A673 (cell line): ENCODE measurements at regions of chr1 and their contacts with region 1.

Region 1: GRCh38 chr1:31663622-31664452 is 19.2 kb upstream of the PEF1 start:
- DNase-seq: peak; percentile 54
- H3K4me3 ChIP-seq: no peak overlapping the region
- H3K27ac ChIP-seq: no peak overlapping the region
- H3K4me1 ChIP-seq: peaks cover 7% of the 10 kb centered on the region
- H3K27me3 ChIP-seq: no peaks in the 10 kb centered on the region
- CTCF ChIP-seq: peak; percentile 87

Region 2: DNA sequence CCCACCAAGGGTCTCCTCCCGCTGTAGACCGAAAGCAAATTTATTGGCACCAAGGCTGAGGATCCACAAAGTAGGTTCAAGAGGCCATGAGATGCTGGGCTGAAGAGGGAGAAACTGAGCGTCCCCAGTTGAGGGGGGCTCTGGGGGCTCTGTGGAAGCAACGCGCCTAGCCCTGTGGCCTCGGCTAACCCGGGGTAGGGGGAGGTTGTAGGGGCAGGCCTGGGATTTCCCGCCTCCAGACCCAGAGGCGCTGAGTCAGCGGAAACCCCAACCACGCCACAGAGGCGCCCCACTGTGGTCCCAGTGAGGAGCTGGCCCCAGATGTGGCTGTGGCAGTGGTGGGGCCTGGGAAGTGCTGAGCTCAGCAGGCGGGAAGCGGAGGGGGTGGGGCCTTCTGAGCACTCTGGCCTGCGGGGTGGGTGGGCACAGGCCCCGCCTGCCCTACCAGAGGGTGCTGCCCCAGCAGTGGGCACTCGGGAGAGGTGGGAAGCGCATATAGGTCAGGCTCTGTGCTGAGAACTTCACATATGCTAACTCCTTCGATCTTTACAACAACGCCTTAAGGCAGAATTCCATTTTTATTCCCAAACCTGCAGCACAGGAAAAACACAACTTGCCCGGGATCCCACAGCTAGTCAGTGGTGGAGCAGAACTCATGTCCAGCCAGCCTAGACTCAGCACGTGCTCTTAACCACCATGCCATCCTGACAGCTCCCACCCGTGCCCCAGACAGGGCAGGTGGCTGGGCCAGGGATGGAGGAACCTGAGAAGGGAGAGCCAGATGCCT is 41.4 kb after region 1 on chr1:
- CTCF ChIA-PET with region 1: no interaction called
- POLR2A ChIA-PET with region 1: no interaction called
- intact Hi-C with region 1: loop called (anchors 2 kb)
- DNase-seq: peak; percentile 88
- H3K4me3 ChIP-seq: no peak overlapping the region
- H3K27ac ChIP-seq: peak overlapping the region; percentile 75
- H3K4me1 ChIP-seq: peaks cover 59% of the 10 kb centered on the region
- H3K27me3 ChIP-seq: no peaks in the 10 kb centered on the region
- CTCF ChIP-seq: peak; percentile 44; the same call in 1 of the 2 replicates

Region 3: GRCh38 chr1:31745096-31745945 is 81.5 kb after region 1 on chr1:
- CTCF ChIA-PET with region 1: interaction called, 20 read pairs
- POLR2A ChIA-PET with region 1: no interaction called
- intact Hi-C with region 1: loop called (anchors 1 kb)
- DNase-seq: peak; percentile 78
- H3K4me3 ChIP-seq: no peak overlapping the region
- H3K27ac ChIP-seq: no peak overlapping the region
- H3K4me1 ChIP-seq: peaks cover 11% of the 10 kb centered on the region
- H3K27me3 ChIP-seq: no peaks in the 10 kb centered on the region
- CTCF ChIP-seq: peak; percentile 80